ENCODE measurements at regions of chr10 and their contacts with region 1.

Region 1: GRCh38 chr10:8130973-8131911 is 76.8 kb downstream of the GATA3 start:
- DNase-seq: peak; percentile 58 to 88
- H3K4me3 ChIP-seq: peak overlapping the region; percentile 24; the same call in 1 of the 2 replicates
- H3K27ac ChIP-seq: peak overlapping the region; percentile 93
- H3K4me1 ChIP-seq: peaks cover 14% of the 10 kb centered on the region
- H3K27me3 ChIP-seq: no peaks in the 10 kb centered on the region
- CTCF ChIP-seq: no peak

Region 2: DNA sequence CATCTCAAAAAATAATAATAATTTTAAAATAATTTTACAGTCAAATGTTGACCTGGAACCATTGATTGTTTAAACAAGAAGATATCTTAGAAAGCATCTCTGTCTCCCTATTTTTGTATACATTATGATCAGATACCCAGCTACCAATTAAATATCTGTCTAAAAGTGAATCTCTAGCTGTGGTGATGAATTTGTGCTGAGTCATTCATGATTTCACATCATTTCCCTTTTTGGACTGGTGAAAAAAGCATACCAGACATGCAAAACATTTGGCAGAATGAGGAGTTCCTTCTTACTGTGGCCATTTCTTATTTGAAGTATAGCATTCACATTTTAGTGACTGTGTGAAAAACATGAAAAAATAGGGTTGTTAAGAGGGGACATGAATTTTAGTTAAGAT is 174.8 kb before region 1 on chr10:
- CTCF ChIA-PET with region 1: no interaction called
- POLR2A ChIA-PET with region 1: no interaction called
- intact Hi-C with region 1: no loop called
- DNase-seq: no peak
- H3K4me3 ChIP-seq: no peak overlapping the region
- H3K27ac ChIP-seq: peak overlapping the region; percentile 37; the same call in 1 of the 2 replicates
- H3K4me1 ChIP-seq: peaks cover 10% of the 10 kb centered on the region
- H3K27me3 ChIP-seq: no peaks in the 10 kb centered on the region
- CTCF ChIP-seq: no peak

Region 3: DNA sequence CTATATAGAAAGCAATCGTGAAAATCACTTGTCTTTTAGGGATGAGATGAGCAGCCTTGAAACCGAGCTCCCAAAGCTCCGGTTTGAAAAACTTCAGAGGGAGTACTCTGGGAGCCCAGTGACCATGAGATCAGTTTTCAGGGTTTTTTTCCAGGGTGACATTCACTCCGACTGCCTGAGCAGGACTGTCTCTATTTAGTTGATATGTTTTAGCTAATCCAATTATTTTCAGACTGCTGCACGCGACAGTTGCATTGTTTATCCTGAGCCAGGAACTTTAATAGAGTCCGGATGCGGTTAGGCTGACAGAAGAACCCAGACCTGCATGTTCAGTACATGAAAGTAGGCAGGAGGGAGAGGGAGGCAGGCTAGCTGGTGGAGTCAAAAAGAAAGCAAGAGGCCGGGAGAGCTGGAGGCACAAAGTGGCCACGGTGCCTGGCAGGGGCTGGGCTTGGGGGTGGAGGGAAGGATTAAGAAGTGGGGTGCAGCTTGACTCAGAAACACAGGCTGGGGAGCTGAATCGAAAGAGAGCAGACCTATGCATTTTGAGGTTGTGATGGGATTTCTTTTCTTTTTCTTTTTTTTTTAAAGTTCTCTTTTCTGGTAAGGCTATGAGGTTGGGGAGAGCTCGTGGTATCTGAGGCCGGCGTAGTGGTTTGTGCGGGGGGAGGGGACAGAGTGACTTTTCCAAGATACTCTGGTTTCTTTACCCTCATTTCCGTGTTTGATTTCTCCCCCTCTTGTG is 71.1 kb before region 1 on chr10:
- CTCF ChIA-PET with region 1: no interaction called
- POLR2A ChIA-PET with region 1: no interaction called
- intact Hi-C with region 1: loop called (anchors 10 kb)
- DNase-seq: no peak
- H3K4me3 ChIP-seq: no peak overlapping the region; the same call in 1 of the 2 replicates
- H3K27ac ChIP-seq: no peak overlapping the region
- H3K4me1 ChIP-seq: 0 out of 2 replicates have a peak, but pooled peaks cover 9% of the 10 kb centered on the region
- H3K27me3 ChIP-seq: no peaks in the 10 kb centered on the region
- CTCF ChIP-seq: no peak

Region 4: DNA sequence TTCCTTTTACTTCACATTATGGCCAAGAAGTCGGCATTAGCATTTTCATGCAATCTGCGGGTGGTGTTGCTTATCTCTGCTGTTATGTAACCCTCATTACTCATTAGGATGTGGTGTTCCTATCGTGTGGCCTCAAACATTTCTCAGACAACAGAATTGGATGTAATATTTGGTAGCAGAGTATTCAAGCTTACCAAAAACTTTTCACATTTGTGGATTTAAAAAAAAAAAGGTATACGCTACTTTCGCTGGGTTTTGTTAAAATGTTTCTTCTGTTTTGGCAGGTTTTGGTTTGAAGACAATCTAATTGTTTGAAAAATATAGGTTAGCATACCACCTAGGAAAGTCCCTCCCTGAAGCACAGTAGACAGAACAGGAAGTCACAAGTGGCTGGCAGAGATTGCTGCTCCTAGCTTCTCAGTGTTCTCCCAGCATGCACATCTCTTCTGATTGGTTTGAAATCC is 52.0 kb after region 1 on chr10:
- CTCF ChIA-PET with region 1: no interaction called
- POLR2A ChIA-PET with region 1: no interaction called
- intact Hi-C with region 1: loop called (anchors 1 kb)
- DNase-seq: peak; percentile 33 to 81
- H3K4me3 ChIP-seq: peak overlapping the region; percentile 38; the same call in 1 of the 2 replicates
- H3K27ac ChIP-seq: peak overlapping the region; percentile 97
- H3K4me1 ChIP-seq: peaks cover 28% of the 10 kb centered on the region
- H3K27me3 ChIP-seq: no peaks in the 10 kb centered on the region
- CTCF ChIP-seq: no peak

Region 5: DNA sequence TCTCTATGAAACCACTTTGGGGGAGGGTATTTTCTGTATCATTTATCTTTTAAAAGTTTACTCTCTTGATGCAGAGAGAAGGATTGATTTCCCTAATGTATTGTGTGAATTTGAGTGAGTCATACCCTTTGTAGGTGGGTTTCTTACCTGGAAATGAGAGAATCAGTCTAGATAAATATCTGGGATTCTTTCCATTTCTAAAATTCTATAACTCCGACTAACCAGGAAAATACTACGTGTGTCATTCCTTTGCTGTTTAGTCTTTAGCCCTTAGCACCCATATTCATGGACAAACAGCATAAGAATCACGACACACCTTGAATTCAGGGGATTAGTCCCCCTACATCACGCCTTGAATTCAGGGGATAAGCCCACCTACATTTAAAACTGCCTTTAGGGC is 62.3 kb after region 1 on chr10:
- CTCF ChIA-PET with region 1: no interaction called
- POLR2A ChIA-PET with region 1: no interaction called
- intact Hi-C with region 1: loop called (anchors 2 kb)
- DNase-seq: peak; percentile 37 to 93
- H3K4me3 ChIP-seq: peak overlapping the region; percentile 52; the same call in 1 of the 2 replicates
- H3K27ac ChIP-seq: peak overlapping the region; percentile 99
- H3K4me1 ChIP-seq: peaks cover 32% of the 10 kb centered on the region
- H3K27me3 ChIP-seq: no peaks in the 10 kb centered on the region
- CTCF ChIP-seq: no peak